A549 (cell line): ENCODE measurements at regions of chr2 and their contacts with region 1.

Region 1: GRCh38 chr2:151409601-151410484 is at the start of gene RIF1:
- DNase-seq: peak; percentile 85 to 97
- ATAC-seq: peak; percentile 97 to 98
- H3K4me3 ChIP-seq: peak within 1 kb of the TSS; percentile 58
- H3K27ac ChIP-seq: peak within 1 kb of the TSS; percentile 94 to 96
- H3K4me1 ChIP-seq: peaks cover 8% of the 10 kb centered on the region
- CTCF ChIP-seq: peak; percentile 43; the same call in 2 of the 3 replicates
- EP300 ChIP-seq: no peak
- POLR2A ChIP-seq: peak; percentile 57
- RAD21 ChIP-seq: peak in 1 of 2 experiments; percentile 24; a peak in 2 of 5 replicates
- polyA plus RNA-seq, gene RIF1: 24.7 and 28.7 TPM in 2 replicates

Region 2: DNA sequence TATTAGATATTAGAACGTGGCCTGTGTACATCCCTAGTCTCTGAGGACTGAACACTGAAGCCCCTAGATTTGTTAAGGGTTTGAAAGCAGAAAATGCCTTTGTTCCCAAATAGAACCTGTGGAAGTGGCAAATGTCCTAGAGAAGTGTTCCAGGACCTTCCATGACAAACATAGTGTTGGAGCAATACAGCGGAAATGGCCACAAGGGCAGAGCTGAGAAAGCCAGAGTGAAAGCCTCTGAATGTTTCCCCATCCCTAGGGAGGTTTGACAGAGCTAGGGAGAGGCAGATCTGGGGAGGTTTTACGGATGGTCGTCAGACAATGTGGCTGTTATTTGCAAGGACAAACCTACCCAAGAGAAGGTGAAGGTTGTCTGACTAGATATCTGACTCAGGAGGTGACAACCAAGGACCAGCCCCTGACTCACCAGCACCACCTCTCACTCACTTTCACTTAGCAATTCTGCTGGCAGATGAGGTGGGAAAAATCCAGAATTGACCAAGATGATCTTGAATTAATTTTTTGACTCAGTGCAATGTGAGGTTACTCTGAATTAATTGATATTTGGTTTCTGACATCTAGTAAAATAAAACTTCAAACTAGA is 172.3 kb before region 1 on chr2:
- CTCF ChIA-PET with region 1: no interaction called
- POLR2A ChIA-PET with region 1: no interaction called
- DNase-seq: no peak
- ATAC-seq: peak in 1 of 2 experiments; percentile 48; a peak in 3 of 6 replicates
- H3K4me3 ChIP-seq: no peak overlapping the region
- H3K27ac ChIP-seq: no peak overlapping the region
- H3K4me1 ChIP-seq: peaks cover 9% of the 10 kb centered on the region; the same call in 1 of the 3 replicates
- CTCF ChIP-seq: no peak
- EP300 ChIP-seq: no peak
- POLR2A ChIP-seq: no peak
- RAD21 ChIP-seq: no peak

Region 3: DNA sequence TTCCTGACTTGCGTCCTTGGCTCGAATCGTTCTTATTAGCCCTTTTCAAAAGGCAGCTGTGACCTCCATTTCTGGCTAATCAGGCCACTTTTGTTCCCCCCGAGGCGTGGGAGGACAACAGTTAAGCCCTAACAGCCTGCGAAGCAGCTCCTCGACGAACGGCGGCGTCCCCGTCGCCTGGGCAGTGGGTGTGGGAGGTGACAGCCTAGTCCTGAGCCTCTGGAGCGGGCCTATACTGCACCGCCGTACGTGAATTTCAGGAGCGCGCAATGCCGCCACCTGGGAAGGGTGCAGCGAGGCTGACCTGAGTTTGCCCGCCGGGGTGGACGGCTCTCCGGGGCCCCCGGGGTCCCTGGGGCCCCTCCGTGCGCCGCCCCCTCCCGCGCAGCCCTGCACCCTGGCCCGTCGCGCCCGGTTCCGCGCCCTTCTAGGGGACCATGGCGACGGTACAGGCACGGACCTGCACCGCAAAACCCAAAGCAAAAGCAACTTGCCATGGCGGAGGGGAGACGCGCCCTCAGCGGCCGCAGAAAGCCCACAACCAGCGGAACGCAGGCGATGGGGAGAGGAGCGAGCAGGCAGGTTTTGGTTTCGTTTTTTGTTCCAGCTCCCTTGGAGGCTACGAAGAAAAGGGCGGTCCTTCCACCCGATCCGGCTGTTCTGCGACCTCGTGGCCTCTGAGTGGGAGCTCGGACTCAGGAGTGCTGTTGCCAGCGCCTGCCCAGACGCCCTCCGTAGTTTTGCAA is 148.4 kb before region 1 on chr2 and contains the start of gene RBM43:
- CTCF ChIA-PET with region 1: interaction called, 3 read pairs
- POLR2A ChIA-PET with region 1: interaction called, 10 read pairs
- DNase-seq: peak; percentile 85 to 89
- ATAC-seq: peak; percentile 92 to 93
- H3K4me3 ChIP-seq: peak within 1 kb of the TSS; percentile 62
- H3K27ac ChIP-seq: peak within 1 kb of the TSS; percentile 93 to 97
- H3K4me1 ChIP-seq: 0 out of 3 replicates have a peak, but pooled peaks cover 7% of the 10 kb centered on the region
- CTCF ChIP-seq: peak; percentile 14; the same call in 1 of the 3 replicates
- EP300 ChIP-seq: no peak
- POLR2A ChIP-seq: peak; percentile 59
- RAD21 ChIP-seq: peak in 1 of 2 experiments; percentile 23; a peak in 2 of 5 replicates
- polyA plus RNA-seq, gene RBM43: 7.3 and 9.3 TPM in 2 replicates

Region 4: GRCh38 chr2:151289369-151290088 is 120.3 kb before region 1 on chr2 and contains the start of gene NMI:
- CTCF ChIA-PET with region 1: interaction called, 4 read pairs
- POLR2A ChIA-PET with region 1: interaction called, 27 read pairs
- DNase-seq: peak; percentile 28 to 64
- ATAC-seq: peak; percentile 86 to 91
- H3K4me3 ChIP-seq: peak within 1 kb of the TSS; percentile 60
- H3K27ac ChIP-seq: peak within 1 kb of the TSS; percentile 90 to 93
- H3K4me1 ChIP-seq: peaks cover 15% of the 10 kb centered on the region; the same call in 2 of the 3 replicates
- CTCF ChIP-seq: no peak
- EP300 ChIP-seq: no peak
- POLR2A ChIP-seq: peak; percentile 51
- RAD21 ChIP-seq: no peak
- polyA plus RNA-seq, gene NMI: 9.7 and 15.4 TPM in 2 replicates